PC-3 (cell line): ENCODE measurements at regions of chr2 and their contacts with region 1.

Region 1: GRCh38 chr2:70919672-70920366 is 15.9 kb upstream of the ATP6V1B1 start:
- DNase-seq: peak; percentile 93
- ATAC-seq: peak; percentile 94
- H3K4me3 ChIP-seq: no peak overlapping the region
- H3K27ac ChIP-seq: no peak overlapping the region
- H3K4me1 ChIP-seq: no peaks in the 10 kb centered on the region
- H3K27me3 ChIP-seq: no peaks in the 10 kb centered on the region
- CTCF ChIP-seq: peak; percentile 92

Region 2: GRCh38 chr2:70871398-70872211 is 48.2 kb before region 1 on chr2:
- CTCF ChIA-PET with region 1: interaction called, 3 read pairs
- POLR2A ChIA-PET with region 1: no interaction called
- intact Hi-C with region 1: loop called (anchors 1 kb)
- DNase-seq: peak; percentile 89
- ATAC-seq: peak; percentile 99
- H3K4me3 ChIP-seq: peak overlapping the region; percentile 48; the same call in 1 of the 2 replicates
- H3K27ac ChIP-seq: no peak overlapping the region
- H3K4me1 ChIP-seq: no peaks in the 10 kb centered on the region; the same call in 1 of the 2 replicates
- H3K27me3 ChIP-seq: peaks cover 23% of the 10 kb centered on the region
- CTCF ChIP-seq: peak; percentile 92